CD4-positive, alpha-beta memory T cell (primary cell): ENCODE measurements at regions of chr2 and their contacts with region 1.

Region 1: GRCh38 chr2:164558450-164558849 is 62.8 kb downstream of the GRB14 start:
- DNase-seq: no peak
- H3K4me3 ChIP-seq: no peak overlapping the region
- H3K4me3 Mint-ChIP-seq: no peak overlapping the region
- H3K27ac ChIP-seq: no peak overlapping the region
- H3K27ac Mint-ChIP-seq: no peak overlapping the region
- H3K4me1 ChIP-seq: no peaks in the 10 kb centered on the region
- H3K4me1 Mint-ChIP-seq: no peaks in the 10 kb centered on the region
- H3K27me3 ChIP-seq: no peaks in the 10 kb centered on the region
- H3K27me3 Mint-ChIP-seq: no peaks in the 10 kb centered on the region

Region 2: GRCh38 chr2:166081131-166081632 is 1522.7 kb after region 1 on chr2:
- CTCF ChIA-PET with region 1: no interaction called
- POLR2A ChIA-PET with region 1: no interaction called
- intact Hi-C with region 1: loop called (anchors 5 kb)
- DNase-seq: no peak
- H3K4me3 ChIP-seq: no peak overlapping the region
- H3K4me3 Mint-ChIP-seq: no peak overlapping the region
- H3K27ac ChIP-seq: no peak overlapping the region
- H3K27ac Mint-ChIP-seq: no peak overlapping the region
- H3K4me1 ChIP-seq: no peaks in the 10 kb centered on the region
- H3K4me1 Mint-ChIP-seq: no peaks in the 10 kb centered on the region
- H3K27me3 ChIP-seq: no peaks in the 10 kb centered on the region
- H3K27me3 Mint-ChIP-seq: peaks cover 1 to 2% of the 10 kb centered on the region in 2 donors